ENCODE measurements at regions of chr22 and their contacts with region 1.

Region 1: DNA sequence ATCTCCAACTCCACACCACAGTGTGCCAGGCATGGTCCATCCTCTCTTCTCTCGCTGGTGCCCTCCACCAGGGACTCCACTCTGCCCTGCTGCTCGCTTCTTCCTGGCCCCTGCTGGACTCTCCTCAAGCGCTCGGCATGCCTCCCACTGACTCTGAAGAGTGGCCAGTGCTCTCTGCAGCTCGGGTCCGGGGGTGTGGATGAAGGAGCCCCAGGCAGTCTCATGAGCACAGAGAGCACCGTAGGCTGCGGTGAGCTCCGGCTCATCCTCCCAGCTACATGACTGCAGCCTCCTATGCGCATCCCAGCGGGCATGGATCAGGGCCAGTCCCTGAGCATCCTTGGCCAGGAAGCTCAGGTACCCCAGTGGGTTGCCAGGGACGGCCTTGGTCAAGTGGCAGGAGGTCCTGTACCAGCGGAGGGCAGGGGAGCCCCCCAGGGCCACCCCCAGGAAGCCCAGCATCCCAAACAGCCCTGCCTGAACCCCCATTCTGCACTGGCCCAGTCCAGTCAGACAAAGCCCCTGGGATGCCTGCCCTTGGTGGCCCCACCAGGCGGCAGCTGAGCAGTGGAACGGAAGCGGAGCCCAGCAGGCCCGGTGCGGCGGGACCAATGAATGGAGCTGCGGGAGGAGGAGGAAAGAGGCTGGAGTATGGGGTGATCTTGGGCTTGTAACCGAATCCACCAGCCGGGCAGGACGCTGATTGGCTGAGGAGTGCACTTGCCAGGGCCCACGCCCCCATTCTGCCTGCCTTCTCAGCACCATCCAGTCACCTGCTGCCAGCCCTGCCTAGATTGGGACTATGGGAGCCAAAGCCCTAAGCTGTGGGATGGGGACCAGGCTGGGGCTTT is at the start of gene PLA2G3:
- DNase-seq: peak in 1 of 2 donors; percentile 46
- ATAC-seq: peak in 2 of 4 donors; percentile 19 to 32
- H3K4me3 ChIP-seq: no peak within 1 kb of the TSS
- H3K27ac ChIP-seq: no peak within 1 kb of the TSS
- H3K4me1 ChIP-seq: no peaks in the 10 kb centered on the region
- H3K27me3 ChIP-seq: peaks cover 0 to 4% (median 0%) of the 10 kb centered on the region in 3 donors
- CTCF ChIP-seq: no peak
- total RNA-seq, gene PLA2G3: not detected

Region 2: DNA sequence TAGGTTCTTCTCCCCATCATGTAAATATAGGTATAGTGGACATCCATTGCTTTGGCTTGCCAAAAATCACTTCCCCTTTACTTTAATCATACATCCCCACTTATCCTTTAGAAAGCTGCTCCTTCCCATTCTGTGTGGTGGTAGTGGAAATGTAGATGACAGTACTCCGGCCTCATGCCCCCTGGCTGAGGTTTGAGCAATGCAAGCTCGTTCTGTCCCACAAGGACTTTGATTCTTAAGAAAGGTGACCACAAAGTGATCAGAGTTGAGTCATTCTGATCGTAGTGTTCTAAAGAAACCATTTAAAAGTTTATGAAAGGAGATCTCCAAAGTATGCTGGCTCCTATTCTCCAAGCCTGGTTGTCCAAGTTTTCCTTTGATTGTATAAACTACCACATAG is 160.2 kb before region 1 on chr22:
- intact Hi-C with region 1: loop called in 1 of 2 experiments (anchors 1 kb)
- DNase-seq: no peak
- ATAC-seq: no peak
- H3K4me3 ChIP-seq: no peak overlapping the region
- H3K27ac ChIP-seq: no peak overlapping the region
- H3K4me1 ChIP-seq: peaks cover 4% of the 10 kb centered on the region
- H3K27me3 ChIP-seq: no peaks in the 10 kb centered on the region
- CTCF ChIP-seq: no peak

Region 3: DNA sequence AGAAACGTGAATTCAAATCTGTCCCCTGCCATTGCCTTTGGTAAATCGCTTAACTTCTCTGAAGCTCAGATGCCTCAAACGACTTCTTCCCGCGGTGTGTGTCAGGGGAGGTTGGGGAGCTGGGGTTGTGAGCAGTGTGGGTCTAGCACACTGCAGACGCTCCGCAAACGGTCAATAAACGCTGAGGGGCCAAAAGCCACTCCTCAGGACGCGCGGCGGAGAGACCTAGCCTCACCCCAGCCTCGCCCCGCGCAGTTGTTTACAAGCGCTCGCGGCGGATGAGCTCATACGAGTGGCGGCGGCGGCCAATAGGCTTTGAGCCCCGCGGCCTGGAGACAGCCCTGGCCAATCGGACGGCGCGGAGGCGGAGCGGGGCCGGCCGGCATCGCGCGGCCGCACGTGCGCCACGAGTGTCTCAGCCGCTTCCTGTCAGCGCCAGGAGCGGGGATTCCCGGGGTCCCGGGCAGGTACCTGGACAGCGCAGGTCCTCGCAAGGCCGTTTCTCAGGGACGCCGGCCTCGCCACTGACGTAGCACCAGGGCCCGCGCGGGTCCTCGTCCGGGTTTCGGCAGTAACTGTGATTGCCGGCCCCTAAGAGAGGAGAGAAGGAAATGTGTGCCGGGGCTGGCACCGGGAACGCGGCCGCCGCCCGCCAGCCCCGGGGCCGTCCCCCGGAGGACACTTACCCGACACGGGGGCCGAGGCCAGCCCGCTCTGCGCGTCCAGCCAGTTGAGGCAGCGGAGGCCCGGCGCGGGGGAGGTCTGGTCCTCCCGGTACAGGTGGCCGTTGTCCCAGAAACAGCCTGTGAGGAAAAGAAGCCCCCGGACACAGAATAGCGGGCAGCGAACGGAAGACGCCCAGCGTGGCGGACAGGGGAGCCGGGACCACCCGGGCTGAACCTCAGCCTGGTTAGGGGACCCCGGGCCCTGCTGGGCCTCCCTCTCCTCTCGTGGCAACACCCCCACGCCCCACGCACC is 150.7 kb after region 1 on chr22:
- intact Hi-C with region 1: no loop called
- DNase-seq: peak; percentile 96 to 98
- ATAC-seq: peak; percentile 88 to 94 (median 91)
- H3K4me3 ChIP-seq: peak overlapping the region; percentile 87
- H3K27ac ChIP-seq: peak overlapping the region; percentile 98
- H3K4me1 ChIP-seq: peaks cover 40% of the 10 kb centered on the region
- H3K27me3 ChIP-seq: no peaks in the 10 kb centered on the region
- CTCF ChIP-seq: no peak

Measured in psoas muscle (tissue), 8 donors.